ENCODE measurements at regions of chr11 and their contacts with region 1.

Region 1: GRCh38 chr11:86193297-86194095 is 51.1 kb upstream of the EED start:
- DNase-seq: peak; percentile 84 to 86
- H3K4me3 ChIP-seq: no peak overlapping the region
- H3K4me3 Mint-ChIP-seq: peak overlapping the region; percentile 70
- H3K27ac Mint-ChIP-seq: peak overlapping the region; percentile 54
- H3K4me1 ChIP-seq: peaks cover 48% of the 10 kb centered on the region
- H3K4me1 Mint-ChIP-seq: peaks cover 27% of the 10 kb centered on the region
- H3K27me3 ChIP-seq: no peaks in the 10 kb centered on the region
- H3K27me3 Mint-ChIP-seq: no peaks in the 10 kb centered on the region
- CTCF ChIP-seq: peak; percentile 95

Region 2: GRCh38 chr11:85941380-85941973 is 252.0 kb before region 1 on chr11:
- CTCF ChIA-PET with region 1: no interaction called
- POLR2A ChIA-PET with region 1: no interaction called
- intact Hi-C with region 1: loop called (anchors 1 kb)
- DNase-seq: peak; percentile 75 to 78
- H3K4me3 ChIP-seq: no peak overlapping the region
- H3K4me3 Mint-ChIP-seq: no peak overlapping the region
- H3K27ac Mint-ChIP-seq: no peak overlapping the region
- H3K4me1 ChIP-seq: no peaks in the 10 kb centered on the region
- H3K4me1 Mint-ChIP-seq: peaks cover 6% of the 10 kb centered on the region
- H3K27me3 ChIP-seq: no peaks in the 10 kb centered on the region
- H3K27me3 Mint-ChIP-seq: no peaks in the 10 kb centered on the region
- CTCF ChIP-seq: peak; percentile 80 to 81

Region 3: DNA sequence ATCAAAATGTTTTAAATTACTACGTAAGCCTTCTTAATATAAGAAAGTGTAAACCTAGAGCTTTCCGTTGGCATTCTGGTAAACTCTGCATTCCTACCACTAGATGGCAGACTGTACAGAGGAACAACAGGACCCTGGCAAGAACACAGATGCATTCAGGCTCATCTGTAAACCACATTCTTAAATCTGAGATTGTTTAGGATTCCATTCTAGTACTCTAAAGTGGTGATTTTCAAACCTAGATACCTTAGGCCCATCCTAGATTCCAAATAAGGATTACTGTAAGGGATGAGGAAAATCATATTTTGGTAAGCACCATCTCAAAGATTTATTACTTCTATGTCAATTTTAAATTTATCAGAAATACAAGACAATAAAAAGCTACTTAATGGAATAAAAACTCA is 151.5 kb before region 1 on chr11:
- CTCF ChIA-PET with region 1: interaction called, 55 read pairs
- POLR2A ChIA-PET with region 1: no interaction called
- intact Hi-C with region 1: loop called (anchors 1 kb)
- DNase-seq: peak; percentile 86 to 91
- H3K4me3 ChIP-seq: no peak overlapping the region
- H3K4me3 Mint-ChIP-seq: no peak overlapping the region
- H3K27ac Mint-ChIP-seq: no peak overlapping the region
- H3K4me1 ChIP-seq: peaks cover 50% of the 10 kb centered on the region
- H3K4me1 Mint-ChIP-seq: peaks cover 51% of the 10 kb centered on the region
- H3K27me3 ChIP-seq: no peaks in the 10 kb centered on the region
- H3K27me3 Mint-ChIP-seq: no peaks in the 10 kb centered on the region
- CTCF ChIP-seq: peak; percentile 97 to 99

Region 4: DNA sequence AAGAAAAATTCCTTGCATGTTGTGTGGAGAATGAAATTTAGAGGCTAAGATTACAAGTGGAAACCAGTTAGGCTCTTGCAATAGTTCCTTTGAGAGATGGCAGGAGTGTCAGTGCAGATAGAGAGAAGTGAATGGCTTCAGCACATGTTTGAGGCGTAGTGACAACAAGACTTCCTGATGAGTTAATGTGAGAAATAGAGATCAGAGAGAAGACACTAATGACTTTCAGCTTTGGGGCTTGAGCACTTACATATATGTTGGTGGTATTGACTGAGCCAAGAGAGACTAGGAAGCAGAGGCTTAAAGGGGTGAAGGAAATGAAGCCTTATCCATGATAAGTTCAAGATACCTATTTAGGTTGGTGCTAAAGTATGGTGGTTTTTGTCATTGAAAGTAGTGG is 68.7 kb before region 1 on chr11:
- CTCF ChIA-PET with region 1: interaction called, 3 read pairs
- POLR2A ChIA-PET with region 1: no interaction called
- intact Hi-C with region 1: loop called (anchors 2 kb)
- DNase-seq: no peak
- H3K4me3 ChIP-seq: peak overlapping the region; percentile 0; the same call in 1 of the 2 replicates
- H3K4me3 Mint-ChIP-seq: peak overlapping the region; percentile 57
- H3K27ac Mint-ChIP-seq: peak overlapping the region; percentile 60
- H3K4me1 ChIP-seq: peaks cover 94% of the 10 kb centered on the region
- H3K4me1 Mint-ChIP-seq: peaks cover 63% of the 10 kb centered on the region
- H3K27me3 ChIP-seq: no peaks in the 10 kb centered on the region
- H3K27me3 Mint-ChIP-seq: no peaks in the 10 kb centered on the region
- CTCF ChIP-seq: no peak

Region 5: DNA sequence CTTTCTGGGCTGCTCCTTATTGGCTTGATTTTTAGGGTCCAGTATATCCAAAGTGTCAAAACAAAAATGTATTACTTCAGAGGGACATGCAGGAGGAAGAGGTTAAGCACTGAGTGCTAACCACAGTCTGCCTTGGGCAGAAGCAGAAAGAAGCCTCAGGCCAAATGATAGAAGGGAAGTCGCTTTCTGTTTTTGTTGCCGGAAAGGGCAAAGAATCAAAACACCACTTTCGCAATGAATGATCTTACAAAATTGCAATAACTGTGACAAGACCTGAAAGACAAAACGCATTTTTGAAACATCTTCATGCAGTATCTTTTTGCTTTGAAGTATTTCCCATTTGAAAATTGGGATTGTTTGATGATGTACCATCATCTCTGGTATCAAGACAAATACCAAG is 54.5 kb before region 1 on chr11:
- CTCF ChIA-PET with region 1: interaction called, 11 read pairs
- POLR2A ChIA-PET with region 1: no interaction called
- intact Hi-C with region 1: loop called (anchors 1 kb)
- DNase-seq: no peak
- H3K4me3 ChIP-seq: no peak overlapping the region
- H3K4me3 Mint-ChIP-seq: no peak overlapping the region
- H3K27ac Mint-ChIP-seq: no peak overlapping the region
- H3K4me1 ChIP-seq: peaks cover 42% of the 10 kb centered on the region
- H3K4me1 Mint-ChIP-seq: peaks cover 18% of the 10 kb centered on the region
- H3K27me3 ChIP-seq: no peaks in the 10 kb centered on the region
- H3K27me3 Mint-ChIP-seq: no peaks in the 10 kb centered on the region
- CTCF ChIP-seq: no peak

Region 6: DNA sequence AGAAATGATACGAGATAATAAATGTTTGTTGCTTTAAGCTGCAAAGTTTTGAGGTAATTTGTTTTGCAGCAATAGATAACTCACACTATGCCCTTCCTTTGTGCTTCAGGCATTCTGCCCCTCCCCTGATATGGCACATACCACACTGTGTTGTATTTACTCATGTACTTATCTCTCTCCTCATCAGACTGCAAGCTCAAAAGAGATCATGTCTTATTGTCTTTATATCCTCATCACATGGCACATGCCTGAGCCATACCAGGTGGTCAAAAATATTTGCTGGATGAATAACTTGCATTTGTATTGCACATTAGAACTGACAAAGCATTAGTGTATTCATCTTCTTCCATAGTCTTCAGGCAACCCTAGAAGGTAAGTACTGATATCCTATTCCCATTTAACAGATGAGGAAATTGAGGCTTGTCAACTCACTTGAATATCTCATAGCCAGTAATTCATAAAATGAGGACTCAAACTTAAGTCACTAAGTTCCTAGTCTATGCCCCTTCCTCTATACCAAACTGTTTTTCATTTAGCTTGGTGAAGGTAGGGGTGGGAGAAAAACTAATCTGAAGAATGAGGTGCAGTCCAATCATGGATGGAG is 32.8 kb before region 1 on chr11:
- CTCF ChIA-PET with region 1: interaction called, 7 read pairs
- POLR2A ChIA-PET with region 1: no interaction called
- intact Hi-C with region 1: loop called (anchors 1 kb)
- DNase-seq: peak; percentile 83 to 89
- H3K4me3 ChIP-seq: no peak overlapping the region
- H3K4me3 Mint-ChIP-seq: no peak overlapping the region
- H3K27ac Mint-ChIP-seq: peak overlapping the region; percentile 7
- H3K4me1 ChIP-seq: peaks cover 67% of the 10 kb centered on the region
- H3K4me1 Mint-ChIP-seq: peaks cover 62% of the 10 kb centered on the region
- H3K27me3 ChIP-seq: no peaks in the 10 kb centered on the region
- H3K27me3 Mint-ChIP-seq: no peaks in the 10 kb centered on the region
- CTCF ChIP-seq: no peak

Region 7: DNA sequence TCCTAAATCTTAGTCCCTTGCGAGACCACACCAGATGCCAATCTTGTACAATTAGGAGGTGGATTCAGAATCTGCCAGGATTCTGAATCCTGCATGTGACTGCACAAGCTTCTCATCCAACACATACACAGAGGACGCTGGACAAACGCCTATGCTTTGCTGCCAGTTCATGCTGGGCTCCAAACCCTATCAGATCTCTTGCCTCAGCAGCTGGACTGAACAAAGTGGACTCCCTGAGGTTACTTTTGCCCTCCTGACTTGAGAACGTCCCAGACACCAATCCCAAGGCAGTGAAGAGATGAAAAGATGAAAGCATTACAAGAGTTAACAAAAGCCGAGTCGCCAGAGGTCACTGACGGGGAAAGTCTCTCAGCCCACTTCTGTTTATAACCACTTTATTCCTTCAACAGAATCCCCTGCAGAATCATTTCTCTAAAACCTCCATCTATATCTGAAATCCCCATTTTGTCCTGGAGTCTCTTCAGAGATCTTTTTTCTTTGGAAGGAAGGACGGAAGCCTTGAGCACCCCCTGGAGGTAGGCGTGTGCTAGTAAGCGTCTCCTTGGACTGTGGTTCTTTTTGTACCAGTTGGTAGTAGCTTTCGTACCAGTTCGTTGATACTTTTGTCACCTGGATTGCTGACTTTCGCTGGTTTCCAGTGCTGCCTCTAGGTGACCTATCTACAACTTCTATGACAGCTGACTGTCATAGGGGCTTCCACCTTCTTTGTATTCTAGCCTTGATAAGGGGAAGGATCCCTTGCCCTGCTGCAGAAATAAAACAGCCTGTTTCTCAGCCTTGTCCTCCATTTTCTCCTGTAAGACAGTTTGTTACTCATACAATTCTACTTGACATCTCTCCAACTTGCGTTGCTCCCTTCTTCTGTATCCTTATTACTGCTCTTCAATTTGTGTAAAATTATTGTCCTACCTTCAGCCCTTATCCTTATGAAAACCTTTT is 24.9 kb after region 1 on chr11:
- CTCF ChIA-PET with region 1: interaction called, 6 read pairs
- POLR2A ChIA-PET with region 1: no interaction called
- intact Hi-C with region 1: loop called (anchors 2 kb)
- DNase-seq: peak; percentile 74 to 88
- H3K4me3 ChIP-seq: no peak overlapping the region
- H3K4me3 Mint-ChIP-seq: peak overlapping the region; percentile 15
- H3K27ac Mint-ChIP-seq: peak overlapping the region; percentile 25
- H3K4me1 ChIP-seq: peaks cover 12% of the 10 kb centered on the region
- H3K4me1 Mint-ChIP-seq: peaks cover 22% of the 10 kb centered on the region
- H3K27me3 ChIP-seq: no peaks in the 10 kb centered on the region
- H3K27me3 Mint-ChIP-seq: no peaks in the 10 kb centered on the region
- CTCF ChIP-seq: peak; percentile 98

Region 8: DNA sequence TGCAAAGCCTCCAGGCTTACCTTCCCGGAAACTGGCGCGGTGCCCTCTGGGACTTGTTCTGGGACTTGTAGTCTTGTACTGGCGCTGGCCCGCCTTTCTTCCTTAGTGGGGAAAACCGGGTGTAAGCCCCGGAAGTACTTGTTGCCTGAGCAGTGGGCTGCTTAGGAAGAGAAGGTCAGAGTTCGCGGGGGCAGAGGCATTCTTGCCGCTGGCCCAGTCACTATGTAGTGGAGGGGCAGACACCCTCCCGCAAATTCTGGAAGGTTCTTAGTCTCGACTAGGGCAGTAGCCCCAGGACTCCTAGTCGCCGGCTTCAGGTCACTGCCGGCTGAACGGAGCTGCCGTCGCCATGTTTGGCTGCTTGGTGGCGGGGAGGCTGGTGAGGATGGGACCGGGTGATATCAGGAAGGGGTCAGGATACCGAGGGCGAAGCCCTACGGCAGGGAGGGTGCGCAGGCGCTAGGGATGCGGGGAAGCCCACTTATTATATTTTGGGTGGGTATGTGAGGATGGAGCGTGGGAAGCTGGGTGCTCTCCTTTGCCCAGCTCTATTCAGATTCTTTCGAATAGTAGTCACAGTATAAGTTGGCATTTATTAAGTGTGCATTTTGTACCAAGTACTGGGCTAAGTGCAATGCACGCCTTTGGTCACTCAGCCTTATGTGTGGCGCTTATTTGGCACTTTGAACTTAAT is 108.8 kb after region 1 on chr11 and contains the start of gene HIKESHI:
- CTCF ChIA-PET with region 1: no interaction called
- POLR2A ChIA-PET with region 1: no interaction called
- intact Hi-C with region 1: no loop called
- DNase-seq: peak; percentile 98 to 99
- H3K4me3 ChIP-seq: peak within 1 kb of the TSS; percentile 58
- H3K4me3 Mint-ChIP-seq: peak within 1 kb of the TSS; percentile 98
- H3K27ac Mint-ChIP-seq: peak within 1 kb of the TSS; percentile 99
- H3K4me1 ChIP-seq: 0 out of 2 replicates have a peak, but pooled peaks cover 10% of the 10 kb centered on the region
- H3K4me1 Mint-ChIP-seq: peaks cover 8% of the 10 kb centered on the region
- H3K27me3 ChIP-seq: no peaks in the 10 kb centered on the region
- H3K27me3 Mint-ChIP-seq: no peaks in the 10 kb centered on the region
- CTCF ChIP-seq: no peak
- total RNA-seq, gene HIKESHI: 81.3 and 82.0 TPM in 2 replicates